Activated CD4-positive, alpha-beta T cell treated with anti-CD3 and anti-CD28 coated beads, Interleukin-2, amount 10 ng/mL, durations not matched to agents 7 days and 5 days (primary cell): ENCODE measurements at regions of chr2 and their contacts with region 1.

Region 1: DNA sequence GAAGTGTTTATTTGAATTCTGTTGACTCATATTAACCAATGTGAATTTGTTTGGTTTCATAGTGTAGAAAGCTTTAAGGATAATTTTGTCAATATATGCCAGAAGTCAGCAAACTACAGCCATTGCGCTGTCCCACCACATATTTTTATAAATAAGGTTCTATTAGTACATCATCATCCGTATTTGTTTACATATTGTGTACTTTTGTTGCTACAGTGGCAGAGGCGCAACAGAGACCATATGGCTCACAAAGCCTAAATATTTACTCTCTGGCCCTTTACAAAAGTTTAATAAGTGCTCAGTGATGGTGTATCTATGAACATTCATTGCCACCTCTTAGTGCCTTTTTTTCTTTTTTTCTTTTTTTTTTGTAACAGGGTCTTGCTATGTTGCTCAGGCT is 6.4 kb downstream of the ERLEC1 start:
- DNase-seq: no peak
- H3K4me3 Mint-ChIP-seq: no peak overlapping the region
- H3K27ac Mint-ChIP-seq: no peak overlapping the region
- H3K4me1 Mint-ChIP-seq: peaks cover 10% of the 10 kb centered on the region
- H3K27me3 Mint-ChIP-seq: no peaks in the 10 kb centered on the region

Region 2: DNA sequence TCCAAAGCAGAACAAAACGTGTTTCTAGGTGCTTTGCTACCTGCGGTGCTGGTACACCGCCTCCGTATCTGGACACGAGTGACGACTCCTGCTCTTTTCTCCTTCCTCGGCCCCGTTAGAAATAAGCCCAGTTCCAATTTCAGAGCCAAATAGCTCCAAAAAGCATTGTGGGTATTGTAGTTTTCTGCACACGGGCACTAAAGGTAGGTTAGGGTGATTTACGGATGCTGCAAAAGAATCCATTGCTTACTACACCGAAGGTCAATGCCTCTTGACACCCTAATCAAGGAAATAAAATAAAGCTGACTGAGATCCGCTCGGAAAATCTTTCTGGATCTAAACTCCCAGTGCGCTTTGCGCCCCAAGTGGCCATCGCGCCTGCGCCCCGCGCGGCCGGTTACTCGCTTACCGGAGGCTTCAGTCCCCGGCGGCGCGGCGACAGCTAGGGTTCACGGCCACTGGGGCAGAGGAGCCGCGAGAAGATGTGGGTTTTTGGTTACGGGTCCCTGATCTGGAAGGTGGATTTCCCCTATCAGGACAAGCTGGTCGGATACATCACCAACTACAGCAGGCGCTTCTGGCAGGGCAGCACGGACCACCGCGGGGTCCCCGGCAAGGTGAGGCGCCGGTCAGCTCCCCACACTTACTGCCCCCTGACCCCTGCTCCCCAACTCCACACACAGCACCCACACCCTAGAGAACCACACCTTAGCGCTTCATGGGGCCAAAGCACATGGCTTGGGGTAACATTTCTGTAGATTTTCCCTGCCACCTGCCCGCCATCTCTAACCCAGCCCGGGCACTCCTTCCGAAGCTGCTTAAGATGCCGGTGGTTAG is 25.6 kb before region 1 on chr2 and contains the start of gene CHAC2:
- CTCF ChIA-PET with region 1: interaction called, 10 read pairs
- POLR2A ChIA-PET with region 1: no interaction called
- DNase-seq: peak; percentile 87
- H3K4me3 Mint-ChIP-seq: peak within 1 kb of the TSS; percentile 90
- H3K27ac Mint-ChIP-seq: peak within 1 kb of the TSS; percentile 97
- H3K4me1 Mint-ChIP-seq: peaks cover 40% of the 10 kb centered on the region
- H3K27me3 Mint-ChIP-seq: no peaks in the 10 kb centered on the region
- total RNA-seq, gene CHAC2: 12.3 to 12.6 TPM